ENCODE measurements at regions of chr17 and their contacts with region 1.

Region 1: GRCh38 chr17:44218344-44219107 is 949 bp downstream of the UBTF start:
- DNase-seq: peak; percentile 90
- ATAC-seq: peak; percentile 63
- H3K4me3 Mint-ChIP-seq: peak overlapping the region; percentile 88
- H3K27ac Mint-ChIP-seq: peak overlapping the region; percentile 91
- H3K4me1 Mint-ChIP-seq: peaks cover 37% of the 10 kb centered on the region
- H3K27me3 Mint-ChIP-seq: no peaks in the 10 kb centered on the region

Region 2: GRCh38 chr17:44314869-44315661 is 96.5 kb after region 1 on chr17:
- CTCF ChIA-PET with region 1: interaction called, 11 read pairs
- DNase-seq: peak; percentile 56
- ATAC-seq: peak; percentile 69
- H3K4me3 Mint-ChIP-seq: peak overlapping the region; percentile 59
- H3K27ac Mint-ChIP-seq: no peak overlapping the region
- H3K4me1 Mint-ChIP-seq: peaks cover 9% of the 10 kb centered on the region
- H3K27me3 Mint-ChIP-seq: peaks cover 31% of the 10 kb centered on the region

Measured in activated CD8-positive, alpha-beta memory T cell treated with anti-CD3 and anti-CD28 coated beads, Interleukin-2, amount 10 ng/mL, durations not matched to agents 7 days and 5 days (primary cell).